Psoas muscle (tissue), 8 donors: ENCODE measurements at regions of chr1 and their contacts with region 1.

Region 1: DNA sequence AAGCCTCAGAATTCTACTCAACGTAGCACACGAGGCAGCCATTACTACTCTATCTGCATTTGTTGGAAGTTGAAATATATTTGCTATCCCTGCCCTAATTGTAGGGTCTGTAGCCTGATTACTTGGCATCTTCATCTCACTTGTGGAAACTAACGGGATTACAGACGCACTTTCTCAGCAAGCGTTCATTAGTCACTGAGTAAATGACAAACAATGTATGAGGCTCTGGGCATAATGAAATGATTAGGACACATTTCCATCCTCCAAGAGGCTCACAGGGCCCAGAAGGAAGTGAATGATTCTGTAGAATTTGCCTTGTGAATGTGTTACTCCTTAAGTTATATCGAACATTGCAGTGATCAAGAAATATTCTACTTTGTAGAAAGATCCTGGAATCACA is 78.1 kb downstream of the KIF26B start:
- DNase-seq: no peak
- ATAC-seq: no peak
- H3K4me3 ChIP-seq: no peak overlapping the region
- H3K27ac ChIP-seq: no peak overlapping the region
- H3K4me1 ChIP-seq: no peaks in the 10 kb centered on the region
- H3K27me3 ChIP-seq: peaks cover 0 to 3% (median 0%) of the 10 kb centered on the region in 3 donors
- CTCF ChIP-seq: no peak

Region 2: GRCh38 chr1:245195401-245195800 is 37.5 kb before region 1 on chr1:
- intact Hi-C with region 1: loop called in 1 of 2 experiments (anchors 2 kb)
- DNase-seq: no peak
- ATAC-seq: no peak
- H3K4me3 ChIP-seq: no peak overlapping the region
- H3K27ac ChIP-seq: no peak overlapping the region
- H3K4me1 ChIP-seq: no peaks in the 10 kb centered on the region
- H3K27me3 ChIP-seq: no peaks in the 10 kb centered on the region
- CTCF ChIP-seq: no peak